Activated T-helper 1 cell treated with anti-CD3 and anti-CD28 coated beads, Interleukin-12 subunit alpha, Interleukin-12 subunit beta, Interleukin-2, Interleukin-4 antibody, amounts not matched to agents 30 ng/mL and 10 ng/mL and 1 ng/mL, durations not matched to agents 14 hours and 24 hours and 36 hours (primary cell): ENCODE measurements at regions of chr3 and their contacts with region 1.

Region 1: GRCh38 chr3:187000711-187001151 is 70.4 kb downstream of the ST6GAL1 start:
- DNase-seq: peak; percentile 29
- H3K4me3 Mint-ChIP-seq: peak overlapping the region; percentile 30
- H3K27ac Mint-ChIP-seq: peak overlapping the region; percentile 90
- H3K4me1 Mint-ChIP-seq: peaks cover 86% of the 10 kb centered on the region
- H3K27me3 Mint-ChIP-seq: no peaks in the 10 kb centered on the region

Region 2: DNA sequence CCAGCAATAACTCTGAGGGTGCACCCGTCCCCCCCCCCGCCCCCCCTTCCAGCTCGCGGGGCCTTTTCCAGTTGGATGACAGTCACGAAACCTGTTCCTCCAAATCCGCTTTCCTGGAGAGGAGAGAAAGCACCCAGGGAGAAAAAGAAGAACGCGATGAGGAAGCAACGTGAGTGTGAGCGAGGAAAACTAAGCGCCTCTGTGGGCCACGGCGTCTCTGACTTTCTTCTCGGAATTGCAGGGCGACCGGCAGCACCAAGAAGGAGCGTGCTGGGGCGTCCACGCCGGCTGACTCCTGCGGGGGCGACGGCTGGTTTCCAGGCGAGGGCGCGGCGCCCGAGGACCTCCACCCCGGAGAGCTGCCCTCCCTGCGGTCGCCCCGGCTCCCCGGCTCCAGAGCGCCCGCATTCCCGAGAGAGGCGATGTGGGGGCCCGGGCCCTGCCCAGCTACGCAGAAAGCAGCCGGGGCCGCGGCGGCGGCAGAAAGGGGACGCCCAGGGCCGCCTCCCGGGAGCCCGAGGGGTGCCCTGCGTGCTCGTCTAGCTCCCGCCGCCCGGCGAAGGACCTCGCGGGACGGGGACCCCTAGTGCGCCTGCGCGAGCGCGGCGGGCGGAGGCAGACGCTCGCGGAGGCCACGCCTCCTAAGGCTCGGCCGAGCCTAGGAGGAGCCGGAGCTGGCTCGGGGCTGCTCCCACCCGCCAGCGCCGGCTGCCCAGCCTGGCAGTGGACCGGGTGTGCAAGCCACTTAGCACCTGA is 173.6 kb before region 1 on chr3:
- intact Hi-C with region 1: loop called (anchors 5 kb)
- DNase-seq: peak; percentile 87
- H3K4me3 Mint-ChIP-seq: peak overlapping the region; percentile 93
- H3K27ac Mint-ChIP-seq: peak overlapping the region; percentile 78
- H3K4me1 Mint-ChIP-seq: peaks cover 20% of the 10 kb centered on the region
- H3K27me3 Mint-ChIP-seq: peaks cover 48% of the 10 kb centered on the region

Region 3: DNA sequence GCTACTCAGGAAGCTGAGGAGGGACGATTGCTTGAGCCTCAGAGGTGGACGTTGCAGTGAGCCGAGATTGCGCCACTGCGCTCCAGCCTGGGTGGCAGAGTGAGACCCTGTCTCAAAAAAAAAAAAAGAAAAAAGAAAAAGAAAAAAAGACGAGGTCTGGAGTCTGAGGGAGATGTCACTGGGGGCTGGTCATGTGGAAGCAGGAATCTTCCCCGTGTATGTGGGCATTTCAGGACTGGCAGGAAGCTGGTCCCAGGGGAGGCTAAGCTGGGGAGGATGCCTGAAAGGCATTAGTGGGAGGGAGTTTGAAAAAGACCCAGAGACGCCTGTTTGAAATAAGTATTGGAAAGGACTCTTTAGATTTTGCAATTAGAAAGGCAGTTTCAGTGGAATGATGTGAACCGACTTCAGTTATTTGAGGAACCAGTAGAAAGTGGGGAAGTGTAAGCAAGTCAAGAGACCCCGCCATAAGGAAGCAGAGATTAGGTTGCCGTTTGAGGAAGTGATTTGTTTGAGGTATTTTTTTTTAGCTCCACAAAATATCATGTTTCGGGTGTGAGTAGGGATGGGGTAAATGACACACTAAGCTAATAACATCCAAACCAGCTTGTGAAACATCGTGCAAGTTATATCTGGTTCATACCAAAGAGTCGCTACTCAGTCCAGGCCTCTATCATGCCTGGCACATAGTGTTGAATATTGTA is 14.9 kb before region 1 on chr3:
- intact Hi-C with region 1: loop called (anchors 1 kb)
- DNase-seq: no peak
- H3K4me3 Mint-ChIP-seq: no peak overlapping the region
- H3K27ac Mint-ChIP-seq: no peak overlapping the region
- H3K4me1 Mint-ChIP-seq: peaks cover 28% of the 10 kb centered on the region
- H3K27me3 Mint-ChIP-seq: no peaks in the 10 kb centered on the region

Region 4: GRCh38 chr3:187031934-187032333 is 31.2 kb after region 1 on chr3:
- intact Hi-C with region 1: no loop called
- DNase-seq: no peak
- H3K4me3 Mint-ChIP-seq: peak overlapping the region; percentile 49
- H3K27ac Mint-ChIP-seq: peak overlapping the region; percentile 72
- H3K4me1 Mint-ChIP-seq: peaks cover 76% of the 10 kb centered on the region
- H3K27me3 Mint-ChIP-seq: no peaks in the 10 kb centered on the region

Region 5: DNA sequence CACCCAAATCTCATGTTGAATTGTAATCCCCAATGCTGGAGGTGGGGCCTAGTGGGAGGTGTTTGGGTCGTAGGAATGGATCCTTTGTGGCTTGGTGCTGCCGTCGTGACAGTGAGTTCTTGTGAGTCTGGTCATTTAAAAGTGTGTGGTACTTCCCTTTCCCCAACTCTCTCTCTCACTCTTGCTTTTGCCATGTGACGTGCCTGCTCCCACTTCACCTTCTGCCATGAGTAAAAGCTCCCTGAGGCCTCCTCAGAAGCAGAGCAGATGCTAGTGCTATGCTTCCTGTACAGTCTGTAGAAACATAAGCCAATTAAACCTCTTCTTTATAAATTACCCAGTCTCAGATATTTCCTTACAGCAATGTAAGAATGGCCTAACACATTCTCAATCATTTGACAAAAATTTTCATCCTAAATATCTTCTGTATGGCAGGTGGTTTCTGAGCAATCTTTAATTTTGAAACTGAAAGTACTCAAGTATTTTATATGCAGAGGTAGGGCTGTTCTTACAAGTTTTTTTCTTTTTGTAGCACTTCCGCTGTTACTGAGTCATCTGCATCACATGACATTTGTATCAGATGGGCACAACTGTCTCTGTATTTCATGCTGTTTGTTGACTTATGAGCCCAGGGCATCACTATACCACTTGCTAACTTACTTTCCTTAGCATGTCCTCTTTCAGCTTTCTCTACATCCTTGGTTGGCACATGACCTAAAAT is 129.8 kb after region 1 on chr3:
- intact Hi-C with region 1: loop called (anchors 2 kb)
- DNase-seq: peak; percentile 47
- H3K4me3 Mint-ChIP-seq: peak overlapping the region; percentile 51
- H3K27ac Mint-ChIP-seq: peak overlapping the region; percentile 91
- H3K4me1 Mint-ChIP-seq: peaks cover 58% of the 10 kb centered on the region
- H3K27me3 Mint-ChIP-seq: no peaks in the 10 kb centered on the region